Body of pancreas (tissue), 4 donors: ENCODE measurements at regions of chr12 and their contacts with region 1.

Region 1: GRCh38 chr12:17763366-17763765 is 326.6 kb downstream of the RERGL start:
- DNase-seq: no peak
- ATAC-seq: no peak
- H3K4me3 ChIP-seq: no peak overlapping the region
- H3K27ac ChIP-seq: no peak overlapping the region
- H3K4me1 ChIP-seq: no peaks in the 10 kb centered on the region
- H3K27me3 ChIP-seq: no peaks in the 10 kb centered on the region
- CTCF ChIP-seq: no peak
- POLR2A ChIP-seq: no peak

Region 2: GRCh38 chr12:17853054-17853453 is 89.7 kb after region 1 on chr12:
- intact Hi-C with region 1: loop called (anchors 2 kb)
- DNase-seq: no peak
- ATAC-seq: no peak
- H3K4me3 ChIP-seq: no peak overlapping the region
- H3K27ac ChIP-seq: no peak overlapping the region
- H3K4me1 ChIP-seq: no peaks in the 10 kb centered on the region
- H3K27me3 ChIP-seq: no peaks in the 10 kb centered on the region
- CTCF ChIP-seq: no peak
- POLR2A ChIP-seq: no peak

Region 3: GRCh38 chr12:17971850-17972249 is 208.5 kb after region 1 on chr12:
- intact Hi-C with region 1: no loop called
- DNase-seq: no peak
- ATAC-seq: no peak
- H3K4me3 ChIP-seq: no peak overlapping the region
- H3K27ac ChIP-seq: no peak overlapping the region
- H3K4me1 ChIP-seq: no peaks in the 10 kb centered on the region
- H3K27me3 ChIP-seq: no peaks in the 10 kb centered on the region
- CTCF ChIP-seq: no peak
- POLR2A ChIP-seq: no peak